CD4-positive, alpha-beta memory T cell (primary cell): ENCODE measurements at regions of chr10 and their contacts with region 1.

Region 1: GRCh38 chr10:114304017-114304570 is 65.0 kb downstream of the VWA2 start:
- DNase-seq: peak; percentile 48 to 66 (median 55)
- H3K4me3 ChIP-seq: peak overlapping the region; percentile 53 to 83
- H3K4me3 Mint-ChIP-seq: peak overlapping the region; percentile 85 to 95 (median 89)
- H3K27ac ChIP-seq: peak overlapping the region; percentile 28
- H3K27ac Mint-ChIP-seq: peak overlapping the region in 6 of 7 donors; percentile 34 to 87 (median 58)
- H3K4me1 ChIP-seq: peaks cover 7% of the 10 kb centered on the region
- H3K4me1 Mint-ChIP-seq: peaks cover 5 to 13% (median 8%) of the 10 kb centered on the region in 4 donors
- H3K27me3 ChIP-seq: no peaks in the 10 kb centered on the region
- H3K27me3 Mint-ChIP-seq: no peaks in the 10 kb centered on the region

Region 2: GRCh38 chr10:114173921-114174694 is 130.0 kb before region 1 on chr10 and contains the start of gene CCDC186:
- CTCF ChIA-PET with region 1: interaction called, 7 read pairs
- POLR2A ChIA-PET with region 1: no interaction called
- intact Hi-C with region 1: loop called (anchors 1 kb)
- DNase-seq: peak; percentile 97 to 98 (median 97)
- H3K4me3 ChIP-seq: peak within 1 kb of the TSS; percentile 47 to 84
- H3K4me3 Mint-ChIP-seq: peak within 1 kb of the TSS; percentile 92 to 99 (median 98)
- H3K27ac ChIP-seq: peak within 1 kb of the TSS; percentile 85
- H3K27ac Mint-ChIP-seq: peak within 1 kb of the TSS; percentile 83 to 99 (median 99)
- H3K4me1 ChIP-seq: peaks cover 35% of the 10 kb centered on the region
- H3K4me1 Mint-ChIP-seq: peaks cover 31 to 57% (median 38%) of the 10 kb centered on the region in 4 donors
- H3K27me3 ChIP-seq: no peaks in the 10 kb centered on the region
- H3K27me3 Mint-ChIP-seq: peaks cover 0 to 1% of the 10 kb centered on the region in 2 donors
- total RNA-seq, gene CCDC186: 39.1 to 43.3 TPM

Region 3: GRCh38 chr10:114223066-114223465 is 81.0 kb before region 1 on chr10:
- CTCF ChIA-PET with region 1: no interaction called
- POLR2A ChIA-PET with region 1: no interaction called
- intact Hi-C with region 1: no loop called
- DNase-seq: no peak
- H3K4me3 ChIP-seq: no peak overlapping the region
- H3K4me3 Mint-ChIP-seq: no peak overlapping the region
- H3K27ac ChIP-seq: no peak overlapping the region
- H3K27ac Mint-ChIP-seq: no peak overlapping the region
- H3K4me1 ChIP-seq: no peaks in the 10 kb centered on the region
- H3K4me1 Mint-ChIP-seq: no peaks in the 10 kb centered on the region
- H3K27me3 ChIP-seq: no peaks in the 10 kb centered on the region
- H3K27me3 Mint-ChIP-seq: peaks cover 26 to 35% of the 10 kb centered on the region in 2 donors

Region 4: GRCh38 chr10:114458955-114459354 is 154.9 kb after region 1 on chr10:
- CTCF ChIA-PET with region 1: interaction called, 14 read pairs
- POLR2A ChIA-PET with region 1: no interaction called
- intact Hi-C with region 1: no loop called
- DNase-seq: no peak
- H3K4me3 ChIP-seq: no peak overlapping the region
- H3K4me3 Mint-ChIP-seq: no peak overlapping the region
- H3K27ac ChIP-seq: no peak overlapping the region
- H3K27ac Mint-ChIP-seq: no peak overlapping the region
- H3K4me1 ChIP-seq: no peaks in the 10 kb centered on the region
- H3K4me1 Mint-ChIP-seq: peaks cover 2 to 5% (median 5%) of the 10 kb centered on the region in 4 donors
- H3K27me3 ChIP-seq: no peaks in the 10 kb centered on the region
- H3K27me3 Mint-ChIP-seq: no peaks in the 10 kb centered on the region

Region 5: DNA sequence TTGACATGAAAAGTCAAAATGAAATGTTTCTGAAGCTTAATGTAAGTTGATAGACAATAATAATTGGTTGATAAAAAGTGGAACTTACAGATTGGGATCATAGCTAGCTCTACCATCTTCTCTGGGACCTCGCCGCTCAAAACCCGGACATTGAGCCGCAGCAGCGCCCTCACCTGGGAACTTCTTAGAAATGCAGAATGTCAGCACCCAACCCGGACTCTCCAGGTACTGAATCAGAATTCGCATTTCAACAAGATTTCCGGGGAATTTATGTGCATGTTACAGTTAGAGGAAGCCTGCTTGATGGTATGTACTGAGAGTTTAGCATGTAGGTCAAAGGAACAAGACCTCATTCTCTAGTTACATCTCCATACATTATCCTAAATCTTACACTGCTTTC is 390.7 kb after region 1 on chr10:
- CTCF ChIA-PET with region 1: interaction called, 8 read pairs
- POLR2A ChIA-PET with region 1: no interaction called
- intact Hi-C with region 1: loop called (anchors 2 kb)
- DNase-seq: peak in 3 of 5 donors; percentile 12 to 18 (median 12)
- H3K4me3 ChIP-seq: no peak overlapping the region
- H3K4me3 Mint-ChIP-seq: peak overlapping the region in 1 of 8 donors; percentile 4
- H3K27ac ChIP-seq: no peak overlapping the region
- H3K27ac Mint-ChIP-seq: no peak overlapping the region
- H3K4me1 ChIP-seq: peaks cover 15% of the 10 kb centered on the region
- H3K4me1 Mint-ChIP-seq: peaks cover 0 to 11% (median 4%) of the 10 kb centered on the region in 4 donors
- H3K27me3 ChIP-seq: no peaks in the 10 kb centered on the region
- H3K27me3 Mint-ChIP-seq: peaks cover 5 to 7% of the 10 kb centered on the region in 2 donors

Region 6: DNA sequence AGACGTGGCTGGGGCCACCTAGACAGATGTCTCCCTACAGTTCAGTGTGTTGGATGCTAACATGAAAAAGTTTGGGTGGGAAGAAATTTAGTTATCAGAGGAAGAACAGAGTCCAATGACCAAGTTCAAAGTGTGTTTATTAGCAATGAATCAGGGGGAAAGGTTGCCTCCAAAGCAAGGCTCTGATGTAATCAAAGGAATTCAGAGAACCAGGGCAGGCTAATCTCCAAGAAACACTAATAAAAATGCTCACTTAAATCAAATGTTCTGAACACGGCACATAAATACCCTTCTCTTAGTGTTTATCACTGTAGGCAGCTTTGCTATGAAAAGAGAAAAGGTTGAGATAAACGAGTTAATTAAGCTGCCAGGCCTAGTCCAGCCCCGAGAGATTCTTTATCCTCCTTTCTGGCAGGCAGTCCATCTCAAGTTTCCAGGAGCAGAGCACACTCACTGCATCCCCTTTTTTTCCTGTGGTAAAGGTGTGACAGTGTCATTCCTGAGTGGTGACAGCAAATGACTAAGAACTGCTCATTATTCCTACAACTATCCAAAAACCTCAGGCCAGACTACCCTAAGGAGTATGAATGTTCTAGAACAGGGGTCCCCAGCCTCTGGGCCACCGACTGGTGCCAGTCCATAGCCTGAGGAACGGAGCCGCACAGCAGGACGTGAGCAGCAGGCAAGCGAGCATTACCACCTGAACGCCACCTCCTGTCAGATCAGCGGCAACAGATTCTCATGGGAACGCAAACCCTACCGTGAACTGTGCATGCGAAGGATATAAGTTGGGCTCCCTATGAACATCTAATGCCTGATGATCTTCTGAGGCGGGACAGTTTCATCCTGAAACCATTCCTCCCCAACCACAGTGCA is 450.6 kb after region 1 on chr10:
- CTCF ChIA-PET with region 1: no interaction called
- POLR2A ChIA-PET with region 1: no interaction called
- intact Hi-C with region 1: no loop called
- DNase-seq: no peak
- H3K4me3 ChIP-seq: no peak overlapping the region
- H3K4me3 Mint-ChIP-seq: no peak overlapping the region
- H3K27ac ChIP-seq: no peak overlapping the region
- H3K27ac Mint-ChIP-seq: no peak overlapping the region
- H3K4me1 ChIP-seq: no peaks in the 10 kb centered on the region
- H3K4me1 Mint-ChIP-seq: no peaks in the 10 kb centered on the region
- H3K27me3 ChIP-seq: no peaks in the 10 kb centered on the region
- H3K27me3 Mint-ChIP-seq: peaks cover 1 to 12% of the 10 kb centered on the region in 2 donors

Region 7: GRCh38 chr10:114795039-114795438 is 490.9 kb after region 1 on chr10:
- CTCF ChIA-PET with region 1: interaction called, 23 read pairs
- POLR2A ChIA-PET with region 1: no interaction called
- intact Hi-C with region 1: no loop called
- DNase-seq: no peak
- H3K4me3 ChIP-seq: no peak overlapping the region
- H3K4me3 Mint-ChIP-seq: no peak overlapping the region
- H3K27ac ChIP-seq: no peak overlapping the region
- H3K27ac Mint-ChIP-seq: no peak overlapping the region
- H3K4me1 ChIP-seq: peaks cover 14% of the 10 kb centered on the region
- H3K4me1 Mint-ChIP-seq: peaks cover 4 to 7% (median 6%) of the 10 kb centered on the region in 4 donors
- H3K27me3 ChIP-seq: no peaks in the 10 kb centered on the region
- H3K27me3 Mint-ChIP-seq: no peaks in the 10 kb centered on the region

Region 8: GRCh38 chr10:115129752-115130151 is 825.7 kb after region 1 on chr10:
- CTCF ChIA-PET with region 1: interaction called, 12 read pairs
- POLR2A ChIA-PET with region 1: no interaction called
- intact Hi-C with region 1: no loop called
- DNase-seq: peak in 4 of 5 donors; percentile 1 to 21 (median 11)
- H3K4me3 ChIP-seq: no peak overlapping the region
- H3K4me3 Mint-ChIP-seq: no peak overlapping the region
- H3K27ac ChIP-seq: no peak overlapping the region
- H3K27ac Mint-ChIP-seq: no peak overlapping the region
- H3K4me1 ChIP-seq: no peaks in the 10 kb centered on the region
- H3K4me1 Mint-ChIP-seq: no peaks in the 10 kb centered on the region
- H3K27me3 ChIP-seq: no peaks in the 10 kb centered on the region
- H3K27me3 Mint-ChIP-seq: peaks cover 3 to 4% of the 10 kb centered on the region in 2 donors